ENCODE measurements at regions of chr19 and their contacts with region 1.

Region 1: DNA sequence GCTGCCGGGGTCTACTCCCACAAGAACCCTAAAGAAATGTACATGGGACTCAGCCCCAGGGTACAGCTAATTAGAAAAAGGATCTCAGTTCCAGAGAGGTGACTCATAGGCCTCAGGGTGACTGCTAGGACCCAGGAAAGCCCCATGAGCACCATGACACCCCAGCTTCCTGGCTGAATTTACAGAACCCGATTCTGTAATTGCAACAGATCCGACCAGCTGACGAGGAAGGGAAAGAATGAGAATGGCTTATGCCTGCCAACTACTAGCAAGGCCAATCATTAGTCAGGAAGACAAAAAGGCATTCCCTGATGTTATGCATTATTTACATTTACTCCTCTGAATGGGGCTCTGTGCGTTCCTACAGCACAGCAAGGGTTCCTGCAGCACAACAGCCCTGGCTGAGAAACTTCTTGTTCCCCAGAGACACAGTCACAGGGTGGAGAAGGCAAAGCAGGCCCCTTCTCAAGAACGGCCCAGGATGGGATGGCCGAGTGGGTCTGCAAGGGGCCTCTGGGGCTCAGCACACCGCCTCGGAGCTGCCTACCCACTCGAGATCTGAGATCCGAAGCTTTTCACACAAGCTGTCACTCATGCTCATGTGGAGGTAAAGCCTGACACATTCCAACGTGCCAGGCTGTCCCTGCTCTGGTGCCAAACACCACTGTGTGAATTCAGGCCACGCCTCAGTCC is 27.2 kb downstream of the PBX4 start:
- DNase-seq: peak; percentile 75
- H3K4me3 Mint-ChIP-seq: peak overlapping the region; percentile 74
- H3K27ac Mint-ChIP-seq: peak overlapping the region; percentile 97
- H3K4me1 Mint-ChIP-seq: peaks cover 77% of the 10 kb centered on the region
- H3K27me3 Mint-ChIP-seq: no peaks in the 10 kb centered on the region

Region 2: DNA sequence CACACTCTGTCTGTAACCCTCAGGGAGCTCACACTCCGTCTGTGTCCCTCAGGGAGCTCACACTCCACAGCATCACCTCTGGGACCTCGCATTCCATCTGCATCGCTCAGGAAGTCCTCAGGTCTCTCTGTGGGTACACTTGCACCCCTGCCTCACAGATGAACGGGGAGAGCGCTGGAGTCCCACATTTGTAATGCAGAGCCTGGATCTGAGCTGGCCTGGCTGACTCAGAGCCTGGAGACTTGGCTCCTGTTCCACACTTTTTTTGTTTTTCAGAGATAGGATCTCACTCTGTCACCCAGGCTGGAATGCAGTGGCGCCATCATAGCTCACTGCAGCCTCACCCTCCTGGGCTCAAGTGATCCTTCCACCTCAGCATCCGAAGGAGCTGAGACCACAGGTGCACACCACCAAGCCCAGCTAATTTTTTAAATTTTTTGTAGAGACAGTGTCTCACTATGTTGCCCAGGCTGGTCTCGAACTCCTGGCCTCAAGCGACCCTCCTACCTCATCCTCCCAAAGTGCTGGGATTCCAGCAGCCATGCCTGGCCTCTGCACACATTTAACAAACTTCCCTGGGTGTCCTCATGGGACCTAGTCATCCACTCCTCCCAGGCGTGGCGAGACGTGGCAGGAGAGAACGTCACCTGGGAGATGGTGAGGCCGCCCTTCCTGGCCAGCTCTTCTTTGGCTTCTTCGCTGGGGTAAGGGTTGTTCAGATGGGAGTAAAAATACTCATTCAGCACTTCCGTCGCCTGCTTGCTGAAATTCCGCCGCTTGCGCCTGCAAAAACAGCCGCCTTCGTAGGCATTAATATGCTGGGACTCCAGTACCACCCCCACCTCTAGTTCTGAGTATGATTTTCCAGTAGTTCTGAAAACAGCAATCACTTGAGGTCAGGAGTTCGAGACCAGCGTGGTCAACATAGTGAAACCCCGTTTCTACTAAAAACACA is 22.2 kb before region 1 on chr19:
- intact Hi-C with region 1: loop called (anchors 2 kb)
- DNase-seq: no peak
- H3K4me3 Mint-ChIP-seq: no peak overlapping the region
- H3K27ac Mint-ChIP-seq: peak overlapping the region; percentile 84
- H3K4me1 Mint-ChIP-seq: peaks cover 5% of the 10 kb centered on the region
- H3K27me3 Mint-ChIP-seq: no peaks in the 10 kb centered on the region

Measured in activated T-helper 1 cell treated with anti-CD3 and anti-CD28 coated beads, Interleukin-12 subunit alpha, Interleukin-12 subunit beta, Interleukin-2, Interleukin-4 antibody, amounts not matched to agents 30 ng/mL and 10 ng/mL and 1 ng/mL, durations not matched to agents 14 hours and 24 hours and 36 hours (primary cell).